ENCODE measurements at regions of chr14 and their contacts with region 1.

Region 1: DNA sequence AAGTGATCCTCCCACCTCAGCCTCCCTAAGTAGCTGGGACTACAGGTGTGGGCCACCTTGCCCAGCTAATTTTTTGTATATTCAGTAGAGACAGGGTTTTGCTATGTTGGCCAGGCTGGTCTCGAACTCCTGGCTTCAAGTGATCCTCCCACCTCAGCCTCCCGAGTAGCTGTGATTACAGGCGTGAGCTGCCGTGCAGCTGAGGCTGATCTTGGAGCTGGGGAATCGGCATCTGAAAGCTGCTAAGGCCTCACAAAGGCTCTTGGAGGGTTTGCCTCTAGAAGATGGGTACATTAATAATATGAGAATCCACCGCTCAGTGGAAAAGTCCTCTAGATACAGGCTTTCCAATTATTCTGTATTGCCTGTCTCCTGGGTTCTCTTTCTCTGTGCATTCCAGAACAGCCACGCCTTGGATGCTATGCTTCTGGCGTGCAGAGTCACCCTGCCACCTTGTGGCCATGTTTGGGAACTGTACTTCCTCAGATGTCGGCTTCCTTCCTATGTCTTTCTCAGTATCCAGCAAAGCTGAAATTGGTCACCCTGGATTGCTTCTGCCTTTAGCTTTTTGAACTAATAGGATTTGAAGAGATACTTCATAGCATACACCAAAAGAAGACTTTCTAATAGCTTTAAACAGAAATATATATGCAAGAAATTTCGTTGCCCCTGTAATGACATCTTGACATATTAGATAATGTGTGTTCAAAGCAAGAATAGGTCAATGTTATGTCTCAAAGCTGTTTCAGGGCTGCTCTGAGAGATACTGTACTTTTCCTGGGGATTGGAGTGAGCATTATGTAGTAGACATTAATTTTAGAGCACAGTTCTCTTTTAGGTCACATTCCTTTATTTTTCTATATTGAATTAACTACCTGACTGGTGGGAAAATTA is 75.4 kb downstream of the SNAPC1 start:
- DNase-seq: peak; percentile 45 to 80 (median 72)
- H3K4me3 ChIP-seq: no peak overlapping the region
- H3K27ac ChIP-seq: no peak overlapping the region
- H3K4me1 ChIP-seq: no peaks in the 10 kb centered on the region
- H3K27me3 ChIP-seq: no peaks in the 10 kb centered on the region
- CTCF ChIP-seq: peak; percentile 80 to 82 (median 80)
- EP300 ChIP-seq: no peak
- POLR2A ChIP-seq: no peak

Region 2: DNA sequence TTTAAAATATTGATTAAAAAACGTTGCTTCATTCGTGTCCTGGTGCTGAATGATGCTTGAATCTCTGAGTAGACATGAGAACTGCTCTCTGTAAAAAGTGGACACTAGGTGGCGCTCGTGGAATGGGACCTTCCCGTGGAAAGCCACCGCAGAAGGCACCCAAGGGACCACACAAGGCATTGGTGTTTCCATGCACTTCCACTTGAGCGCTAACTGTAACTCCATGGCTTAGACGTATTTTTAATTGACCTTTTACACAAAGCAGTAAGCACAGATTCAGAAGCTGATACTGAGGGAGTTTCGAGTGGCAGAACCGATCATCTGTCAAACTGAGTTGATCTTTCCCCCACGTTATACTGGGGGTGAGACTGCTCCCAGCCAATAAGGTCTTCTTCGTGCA is 380.9 kb before region 1 on chr14:
- intact Hi-C with region 1: loop called (anchors 2 to 5 kb)
- DNase-seq: peak; percentile 65 to 83 (median 68)
- H3K4me3 ChIP-seq: no peak overlapping the region
- H3K27ac ChIP-seq: no peak overlapping the region
- H3K4me1 ChIP-seq: no peaks in the 10 kb centered on the region
- H3K27me3 ChIP-seq: no peaks in the 10 kb centered on the region
- CTCF ChIP-seq: peak; percentile 53 to 70 (median 55)
- EP300 ChIP-seq: no peak
- POLR2A ChIP-seq: no peak

Region 3: DNA sequence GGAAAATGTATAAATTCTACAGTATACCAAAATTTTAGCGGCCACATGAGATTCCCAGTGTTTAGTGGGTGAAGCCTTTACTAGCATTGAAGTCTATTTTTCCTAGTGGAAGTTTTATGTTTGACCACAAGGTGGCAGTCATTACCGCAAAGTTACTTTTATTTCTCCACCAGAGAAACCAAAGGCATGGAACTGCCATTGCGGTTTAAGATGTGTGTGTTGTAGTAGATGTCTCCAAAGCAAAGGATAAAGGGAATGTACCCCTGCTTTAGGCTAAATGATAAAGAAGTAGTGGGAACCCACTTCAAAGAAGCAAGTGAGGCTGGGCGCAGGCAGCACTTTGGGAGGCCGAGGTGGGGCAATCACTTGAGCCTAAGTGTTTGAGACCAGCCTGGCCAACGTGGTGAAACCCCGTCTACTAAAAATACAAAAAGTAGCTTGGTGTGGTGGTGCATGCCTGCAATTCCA is 375.7 kb before region 1 on chr14:
- intact Hi-C with region 1: loop called (anchors 2 to 5 kb)
- DNase-seq: peak in 1 of 5 donors; percentile 40
- H3K4me3 ChIP-seq: no peak overlapping the region
- H3K27ac ChIP-seq: no peak overlapping the region
- H3K4me1 ChIP-seq: peaks cover 4% of the 10 kb centered on the region
- H3K27me3 ChIP-seq: no peaks in the 10 kb centered on the region
- CTCF ChIP-seq: peak; percentile 68 to 88 (median 78)
- EP300 ChIP-seq: no peak
- POLR2A ChIP-seq: no peak

Region 4: DNA sequence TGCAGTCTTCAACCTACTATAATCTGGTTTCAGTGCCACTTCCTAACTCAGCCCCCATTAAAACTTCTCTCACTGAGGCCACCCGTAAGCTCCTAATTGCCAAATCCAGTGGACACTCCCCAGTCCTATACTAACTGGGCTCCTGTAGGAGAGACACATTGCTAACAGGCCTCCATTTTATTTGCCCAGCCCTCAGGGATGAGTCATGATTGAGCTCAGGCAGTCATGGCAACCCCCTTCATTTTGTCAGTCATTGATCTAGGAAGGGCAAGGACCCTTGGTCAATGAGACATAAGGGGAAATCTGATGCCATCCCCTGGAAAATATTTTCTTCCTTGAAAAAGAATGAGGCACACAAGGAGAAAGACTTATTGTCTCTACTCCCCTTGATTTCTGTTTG is 212.4 kb before region 1 on chr14:
- intact Hi-C with region 1: no loop called
- DNase-seq: no peak
- H3K4me3 ChIP-seq: no peak overlapping the region
- H3K27ac ChIP-seq: no peak overlapping the region
- H3K4me1 ChIP-seq: no peaks in the 10 kb centered on the region
- H3K27me3 ChIP-seq: no peaks in the 10 kb centered on the region
- CTCF ChIP-seq: no peak
- EP300 ChIP-seq: no peak
- POLR2A ChIP-seq: no peak

Region 5: DNA sequence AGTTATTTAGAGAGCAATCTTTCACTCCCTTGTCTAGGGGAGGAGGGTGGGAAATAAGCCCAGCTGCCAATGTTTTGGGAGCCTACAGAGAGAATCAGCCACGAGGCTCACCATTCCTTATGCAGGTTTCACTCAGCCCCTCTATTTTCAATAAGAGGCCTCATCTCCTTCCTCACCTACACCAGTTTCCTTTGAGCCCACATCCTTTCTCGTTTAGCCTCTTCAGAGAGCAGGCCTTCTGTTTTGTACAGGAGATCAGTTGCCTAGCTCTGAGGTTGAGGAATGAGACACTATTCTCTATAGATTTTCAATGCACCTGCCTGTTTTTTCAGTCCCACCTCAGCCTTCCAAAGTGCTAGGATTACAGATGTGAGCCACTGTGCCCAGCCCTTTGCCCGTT is 57.5 kb before region 1 on chr14:
- intact Hi-C with region 1: no loop called
- DNase-seq: no peak
- H3K4me3 ChIP-seq: no peak overlapping the region
- H3K27ac ChIP-seq: no peak overlapping the region
- H3K4me1 ChIP-seq: no peaks in the 10 kb centered on the region
- H3K27me3 ChIP-seq: no peaks in the 10 kb centered on the region
- CTCF ChIP-seq: no peak
- EP300 ChIP-seq: no peak
- POLR2A ChIP-seq: no peak

Region 6: DNA sequence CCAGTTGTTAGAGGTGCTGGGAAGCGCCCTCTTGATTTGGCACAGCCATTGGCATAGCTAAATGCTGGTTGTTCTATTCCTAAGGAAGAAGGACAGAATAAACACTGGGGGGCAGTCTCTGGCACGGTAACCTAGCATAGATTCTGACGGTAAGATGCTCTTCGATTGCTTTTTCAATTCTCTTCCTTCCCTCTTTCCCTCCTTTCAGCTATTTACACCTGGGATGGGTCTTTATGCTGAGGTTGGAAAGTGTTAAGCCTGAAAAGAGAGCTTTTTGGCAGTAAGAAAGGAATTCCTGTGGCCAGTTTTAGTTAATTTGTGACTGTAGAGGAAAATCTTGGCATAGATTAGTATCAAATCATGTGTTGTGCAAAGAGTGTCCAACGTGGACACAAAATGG is 87.5 kb after region 1 on chr14:
- intact Hi-C with region 1: no loop called
- DNase-seq: no peak
- H3K4me3 ChIP-seq: no peak overlapping the region
- H3K27ac ChIP-seq: no peak overlapping the region
- H3K4me1 ChIP-seq: no peaks in the 10 kb centered on the region
- H3K27me3 ChIP-seq: no peaks in the 10 kb centered on the region
- CTCF ChIP-seq: no peak
- EP300 ChIP-seq: no peak
- POLR2A ChIP-seq: no peak

Measured in ovary (tissue), 10 donors.